Calu3 (cell line): ENCODE measurements at regions of chr3 and their contacts with region 1.

Region 1: GRCh38 chr3:42539869-42540714 is 37.6 kb downstream of the VIPR1 start:
- DNase-seq: peak; percentile 88
- H3K4me3 Mint-ChIP-seq: no peak overlapping the region
- H3K27ac Mint-ChIP-seq: no peak overlapping the region
- H3K4me1 Mint-ChIP-seq: no peaks in the 10 kb centered on the region
- H3K27me3 Mint-ChIP-seq: no peaks in the 10 kb centered on the region
- CTCF ChIP-seq: peak; percentile 71

Region 2: GRCh38 chr3:41963823-41964222 is 576.3 kb before region 1 on chr3:
- CTCF ChIA-PET with region 1: no interaction called
- intact Hi-C with region 1: no loop called
- DNase-seq: no peak
- H3K4me3 Mint-ChIP-seq: no peak overlapping the region
- H3K27ac Mint-ChIP-seq: no peak overlapping the region
- H3K4me1 Mint-ChIP-seq: peaks cover 9% of the 10 kb centered on the region
- H3K27me3 Mint-ChIP-seq: peaks cover 8% of the 10 kb centered on the region
- CTCF ChIP-seq: no peak

Region 3: DNA sequence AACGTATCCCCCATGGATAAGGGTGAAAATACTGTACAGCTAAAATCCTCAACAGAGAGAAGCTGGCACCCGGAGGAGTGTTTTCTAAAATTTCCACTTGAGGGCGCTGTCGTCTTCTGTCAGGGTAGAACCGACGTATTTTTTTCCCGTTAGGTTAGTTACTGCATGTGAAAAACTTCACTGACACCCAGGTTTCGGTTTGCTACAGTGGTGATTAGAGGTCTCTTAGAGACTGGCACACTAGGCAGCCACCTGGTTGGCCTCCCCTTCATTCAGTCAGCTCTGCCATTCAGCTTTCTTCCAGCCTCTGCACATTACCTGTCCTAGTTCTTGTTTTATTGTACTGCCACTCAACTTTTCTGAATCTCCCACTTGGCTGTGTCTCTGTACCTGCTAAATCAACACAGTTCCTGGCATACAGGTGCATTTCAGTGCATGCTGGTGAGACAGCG is 292.5 kb before region 1 on chr3:
- CTCF ChIA-PET with region 1: interaction called, 6 read pairs
- intact Hi-C with region 1: loop called (anchors 5 kb)
- DNase-seq: peak; percentile 73
- H3K4me3 Mint-ChIP-seq: no peak overlapping the region
- H3K27ac Mint-ChIP-seq: no peak overlapping the region
- H3K4me1 Mint-ChIP-seq: no peaks in the 10 kb centered on the region
- H3K27me3 Mint-ChIP-seq: peaks cover 46% of the 10 kb centered on the region
- CTCF ChIP-seq: peak; percentile 75

Region 4: DNA sequence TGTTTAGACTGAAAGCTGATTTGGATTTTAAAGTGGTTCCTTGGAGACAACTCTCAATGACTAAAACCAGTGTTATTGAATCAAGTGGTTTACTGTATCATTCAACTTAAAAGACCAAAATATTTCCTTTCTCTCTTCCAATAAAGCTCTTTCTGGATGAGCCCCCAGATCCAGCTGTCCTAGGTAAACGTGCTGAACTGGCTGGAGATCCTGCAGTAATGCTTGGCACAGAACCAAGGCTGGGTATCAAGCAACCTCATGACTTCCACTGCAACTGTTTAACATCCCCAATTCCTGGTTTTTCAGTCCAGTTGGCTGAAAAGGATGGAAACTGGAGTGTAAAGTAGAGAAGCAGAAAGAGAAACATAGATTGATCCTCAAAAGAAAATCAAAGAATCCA is 12.7 kb after region 1 on chr3:
- CTCF ChIA-PET with region 1: no interaction called
- intact Hi-C with region 1: no loop called
- DNase-seq: no peak
- H3K4me3 Mint-ChIP-seq: no peak overlapping the region
- H3K27ac Mint-ChIP-seq: no peak overlapping the region
- H3K4me1 Mint-ChIP-seq: no peaks in the 10 kb centered on the region
- H3K27me3 Mint-ChIP-seq: no peaks in the 10 kb centered on the region
- CTCF ChIP-seq: no peak